ENCODE measurements at regions of chr11 and their contacts with region 1.

Region 1: DNA sequence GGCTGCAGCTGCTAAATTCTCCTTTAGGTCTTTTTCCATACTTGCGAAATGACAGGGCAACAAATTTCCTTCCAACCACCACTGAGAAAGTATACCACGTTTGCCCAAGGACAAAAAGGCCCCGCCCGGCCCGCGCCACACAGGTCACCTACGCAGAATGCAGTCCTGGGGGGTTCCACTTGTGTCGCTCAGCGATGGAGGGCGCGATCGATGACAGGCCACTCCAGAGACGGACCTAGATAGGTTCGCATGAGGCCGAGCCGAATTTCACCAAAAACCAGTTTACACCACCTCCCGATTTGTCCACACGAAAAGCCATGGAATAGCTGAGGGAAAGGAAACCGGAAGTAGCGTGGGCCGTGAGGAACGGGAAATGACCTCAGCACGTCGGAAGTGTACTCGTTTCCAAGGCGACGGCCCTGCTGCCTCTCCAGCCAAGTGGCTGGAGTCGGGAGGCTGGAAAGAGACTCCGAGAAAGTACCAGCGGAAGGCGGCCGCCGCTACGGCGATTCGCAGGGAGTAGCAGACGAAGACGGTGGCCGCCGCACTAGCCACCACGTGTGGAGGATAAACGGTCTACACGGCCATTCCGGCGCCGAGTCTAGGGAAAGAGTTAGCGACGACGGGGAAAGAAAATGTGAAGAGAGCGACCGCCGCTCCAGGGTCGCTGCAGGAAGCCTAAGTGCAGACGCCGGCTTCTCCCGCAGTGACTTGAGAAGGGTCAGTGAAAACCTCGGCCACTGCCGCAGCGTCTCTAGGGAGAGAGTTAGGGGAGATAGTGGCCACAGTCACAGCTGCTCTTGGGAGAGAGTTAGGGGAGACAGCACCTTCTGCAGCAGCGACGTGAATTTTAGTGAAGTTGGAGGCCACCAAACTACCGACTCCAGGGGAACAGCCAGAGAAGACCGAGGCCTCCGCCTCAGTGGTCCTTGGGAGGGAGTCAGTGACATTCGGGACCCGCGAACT is at the start of gene ANKRD42:
- DNase-seq: peak; percentile 97
- H3K4me3 ChIP-seq: peak within 1 kb of the TSS; percentile 73 to 81 (median 74)
- H3K27ac ChIP-seq: peak within 1 kb of the TSS; percentile 87 to 94 (median 90)
- H3K4me1 ChIP-seq: peaks cover 0 to 43% (median 37%) of the 10 kb centered on the region in 4 donors
- H3K27me3 ChIP-seq: no peaks in the 10 kb centered on the region
- CTCF ChIP-seq: peak in 1 of 4 experiments; percentile 25
- EP300 ChIP-seq: peak in 2 of 4 donors; percentile 1 to 23
- POLR2A ChIP-seq: peak; percentile 62 to 85
- total RNA-seq, gene ANKRD42: 9.6 to 12.2 (median 11.0) TPM

Region 2: GRCh38 chr11:82790723-82791484 is 402.7 kb before region 1 on chr11:
- intact Hi-C with region 1: no loop called
- DNase-seq: no peak
- H3K4me3 ChIP-seq: no peak overlapping the region
- H3K27ac ChIP-seq: no peak overlapping the region
- H3K4me1 ChIP-seq: no peaks in the 10 kb centered on the region
- H3K27me3 ChIP-seq: no peaks in the 10 kb centered on the region
- CTCF ChIP-seq: no peak
- EP300 ChIP-seq: no peak
- POLR2A ChIP-seq: no peak

Region 3: DNA sequence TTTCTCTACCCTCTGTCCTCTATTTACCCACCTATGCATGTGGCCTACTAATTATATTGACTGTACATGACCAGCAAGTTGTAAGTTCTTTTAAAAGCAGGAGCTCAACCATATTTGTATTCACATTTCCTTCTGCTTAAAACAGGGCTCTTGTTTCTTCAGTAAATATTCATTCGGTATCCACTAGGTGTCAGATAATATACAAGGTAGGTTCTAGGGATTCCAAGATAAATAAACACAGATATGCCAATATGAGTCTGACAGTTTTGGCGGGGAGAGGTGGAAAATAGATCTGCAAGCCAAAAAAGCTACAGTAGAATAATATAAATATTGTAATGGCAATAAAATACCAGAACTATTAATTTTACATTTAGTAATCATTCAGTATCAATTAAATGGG is 106.6 kb before region 1 on chr11:
- intact Hi-C with region 1: no loop called
- DNase-seq: no peak
- H3K4me3 ChIP-seq: no peak overlapping the region
- H3K27ac ChIP-seq: no peak overlapping the region
- H3K4me1 ChIP-seq: peaks cover 0 to 10% (median 0%) of the 10 kb centered on the region in 4 donors
- H3K27me3 ChIP-seq: no peaks in the 10 kb centered on the region
- CTCF ChIP-seq: peak in 1 of 4 experiments; percentile 18
- EP300 ChIP-seq: no peak
- POLR2A ChIP-seq: no peak

Region 4: DNA sequence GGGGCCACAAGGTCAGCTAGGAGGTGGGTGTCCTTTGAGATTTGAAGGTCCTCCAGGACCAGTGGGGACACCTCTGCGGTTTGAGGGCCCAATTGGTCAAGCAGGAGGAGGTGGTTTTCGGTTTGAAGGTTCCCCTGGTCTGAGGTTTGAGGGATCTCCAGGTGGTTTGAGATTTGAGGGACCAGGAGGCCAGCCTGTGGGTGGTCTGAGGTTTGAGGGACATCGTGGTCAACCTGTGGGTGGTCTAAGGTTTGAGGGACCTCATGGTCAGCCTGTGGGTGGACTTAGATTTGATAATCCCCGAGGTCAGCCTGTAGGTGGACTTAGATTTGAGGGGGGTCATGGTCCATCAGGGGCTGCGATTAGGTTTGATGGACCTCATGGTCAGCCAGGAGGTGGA is 24.8 kb before region 1 on chr11:
- intact Hi-C with region 1: no loop called
- DNase-seq: no peak
- H3K4me3 ChIP-seq: no peak overlapping the region
- H3K27ac ChIP-seq: no peak overlapping the region
- H3K4me1 ChIP-seq: peaks cover 0 to 43% (median 40%) of the 10 kb centered on the region in 4 donors
- H3K27me3 ChIP-seq: no peaks in the 10 kb centered on the region
- CTCF ChIP-seq: no peak
- EP300 ChIP-seq: no peak
- POLR2A ChIP-seq: no peak

Region 5: GRCh38 chr11:83241291-83241946 is 47.8 kb after region 1 on chr11:
- intact Hi-C with region 1: no loop called
- DNase-seq: no peak
- H3K4me3 ChIP-seq: no peak overlapping the region
- H3K27ac ChIP-seq: no peak overlapping the region
- H3K4me1 ChIP-seq: no peaks in the 10 kb centered on the region
- H3K27me3 ChIP-seq: no peaks in the 10 kb centered on the region
- CTCF ChIP-seq: peak; percentile 24 to 52 (median 30)
- EP300 ChIP-seq: no peak
- POLR2A ChIP-seq: no peak

Region 6: GRCh38 chr11:83285771-83286528 is 92.4 kb after region 1 on chr11 and contains the start of gene CCDC90B:
- intact Hi-C with region 1: loop called (anchors 5 kb)
- DNase-seq: peak; percentile 98
- H3K4me3 ChIP-seq: peak within 1 kb of the TSS; percentile 57 to 80 (median 72)
- H3K27ac ChIP-seq: peak within 1 kb of the TSS; percentile 95 to 97 (median 96)
- H3K4me1 ChIP-seq: peaks cover 0 to 46% (median 40%) of the 10 kb centered on the region in 4 donors
- H3K27me3 ChIP-seq: no peaks in the 10 kb centered on the region
- CTCF ChIP-seq: no peak
- EP300 ChIP-seq: no peak
- POLR2A ChIP-seq: peak; percentile 67 to 73
- total RNA-seq, gene CCDC90B: 28.9 to 49.2 (median 42.6) TPM